Activated CD4-positive, alpha-beta memory T cell treated with anti-CD3 and anti-CD28 coated beads for 36 hours (primary cell): ENCODE measurements at regions of chr3 and their contacts with region 1.

Region 1: GRCh38 chr3:14261229-14261628 is 82.6 kb downstream of the LSM3 start:
- DNase-seq: peak; percentile 83
- H3K4me3 Mint-ChIP-seq: no peak overlapping the region
- H3K27ac Mint-ChIP-seq: no peak overlapping the region
- H3K4me1 Mint-ChIP-seq: no peaks in the 10 kb centered on the region
- H3K27me3 Mint-ChIP-seq: peaks cover 16% of the 10 kb centered on the region

Region 2: DNA sequence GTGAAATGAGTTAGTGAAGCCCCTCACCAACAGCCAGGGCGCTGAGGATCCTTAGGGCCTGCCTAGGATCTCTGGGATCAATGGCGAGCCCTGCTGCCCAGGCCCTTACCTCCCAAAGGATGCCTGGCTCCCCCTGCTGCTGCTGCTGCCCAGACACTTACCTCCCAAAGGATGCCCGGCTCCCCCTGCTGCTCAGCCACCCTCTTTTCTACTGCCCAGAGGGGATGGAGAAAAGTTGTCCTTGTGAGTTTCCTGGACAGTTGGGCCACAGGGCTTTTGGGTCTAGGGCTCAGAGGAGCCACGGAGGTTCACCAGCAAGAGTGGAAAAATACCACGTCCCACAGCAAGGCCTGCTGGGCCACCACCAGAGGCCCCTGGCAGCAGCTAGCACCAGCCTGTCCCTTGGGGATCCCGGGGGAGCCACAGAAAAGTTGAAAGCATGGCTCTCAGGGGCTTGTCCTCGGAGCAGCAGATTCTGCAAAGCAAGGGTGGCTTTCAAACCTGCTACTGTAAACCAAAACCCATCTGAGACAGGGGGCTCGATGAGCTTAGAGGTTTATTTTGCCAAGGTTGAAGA is 200.6 kb after region 1 on chr3:
- CTCF ChIA-PET with region 1: interaction called, 31 read pairs
- POLR2A ChIA-PET with region 1: interaction called, 3 read pairs
- intact Hi-C with region 1: loop called (anchors 2 kb)
- DNase-seq: peak; percentile 58
- H3K4me3 Mint-ChIP-seq: no peak overlapping the region
- H3K27ac Mint-ChIP-seq: peak overlapping the region; percentile 65
- H3K4me1 Mint-ChIP-seq: peaks cover 35% of the 10 kb centered on the region
- H3K27me3 Mint-ChIP-seq: no peaks in the 10 kb centered on the region

Region 3: GRCh38 chr3:14548321-14548729 is 287.1 kb after region 1 on chr3:
- CTCF ChIA-PET with region 1: interaction called, 3 read pairs
- POLR2A ChIA-PET with region 1: no interaction called
- intact Hi-C with region 1: loop called (anchors 1 kb)
- DNase-seq: peak; percentile 50
- H3K4me3 Mint-ChIP-seq: no peak overlapping the region
- H3K27ac Mint-ChIP-seq: no peak overlapping the region
- H3K4me1 Mint-ChIP-seq: no peaks in the 10 kb centered on the region
- H3K27me3 Mint-ChIP-seq: peaks cover 26% of the 10 kb centered on the region